ENCODE measurements at regions of chr19 and their contacts with region 1.

Region 1: DNA sequence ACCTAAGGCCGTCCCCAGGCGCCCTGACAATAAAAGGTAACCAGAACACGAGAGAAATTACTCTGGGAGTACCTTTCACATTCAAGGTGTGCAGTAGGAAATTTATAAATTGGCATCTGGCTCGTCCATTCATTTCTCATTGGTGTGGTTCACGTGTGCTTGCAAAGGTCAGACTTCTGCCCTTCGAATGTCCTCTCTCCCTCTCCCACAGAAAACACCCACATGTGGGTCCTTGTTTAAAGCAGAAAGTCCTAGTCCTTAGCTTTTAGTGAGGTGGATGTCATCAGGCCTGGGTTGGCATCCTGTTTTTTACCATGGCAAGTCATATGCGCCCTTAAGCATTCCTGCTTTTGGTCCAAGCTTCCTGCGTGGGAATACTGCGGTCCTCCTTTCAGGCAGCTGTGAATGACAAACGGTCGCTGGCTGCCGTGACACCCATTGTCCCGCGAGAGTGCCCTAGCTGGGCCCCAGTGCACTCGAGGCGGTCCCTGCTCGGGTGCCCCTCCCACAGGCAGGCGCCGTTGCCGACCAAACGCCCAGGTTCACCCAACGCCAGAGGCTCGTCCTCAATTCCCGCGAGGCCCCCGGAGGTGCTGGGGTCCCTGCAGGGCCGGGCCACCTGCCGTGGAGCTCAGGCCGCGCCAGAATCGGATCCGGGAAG is at the start of gene NUDT19:
- DNase-seq: peak; percentile 53 to 85 (median 75)
- ATAC-seq: peak; percentile 79
- H3K4me3 ChIP-seq: peak within 1 kb of the TSS; percentile 60 to 79
- H3K4me3 Mint-ChIP-seq: peak within 1 kb of the TSS; percentile 92
- H3K27ac ChIP-seq: peak within 1 kb of the TSS; percentile 35 to 74
- H3K27ac Mint-ChIP-seq: peak within 1 kb of the TSS; percentile 90
- H3K4me1 ChIP-seq: peaks cover 35% of the 10 kb centered on the region
- H3K4me1 Mint-ChIP-seq: peaks cover 52% of the 10 kb centered on the region
- H3K27me3 ChIP-seq: no peaks in the 10 kb centered on the region
- H3K27me3 Mint-ChIP-seq: no peaks in the 10 kb centered on the region
- CTCF ChIP-seq: no peak
- total RNA-seq, gene NUDT19: 15.3 to 18.0 TPM

Region 2: GRCh38 chr19:32453736-32454135 is 237.7 kb before region 1 on chr19:
- CTCF ChIA-PET with region 1: no interaction called
- POLR2A ChIA-PET with region 1: no interaction called
- intact Hi-C with region 1: no loop called
- DNase-seq: no peak
- ATAC-seq: no peak
- H3K4me3 ChIP-seq: no peak overlapping the region
- H3K4me3 Mint-ChIP-seq: no peak overlapping the region
- H3K27ac ChIP-seq: no peak overlapping the region
- H3K27ac Mint-ChIP-seq: no peak overlapping the region
- H3K4me1 ChIP-seq: no peaks in the 10 kb centered on the region
- H3K4me1 Mint-ChIP-seq: peaks cover 5% of the 10 kb centered on the region
- H3K27me3 ChIP-seq: no peaks in the 10 kb centered on the region
- H3K27me3 Mint-ChIP-seq: no peaks in the 10 kb centered on the region
- CTCF ChIP-seq: no peak

Region 3: DNA sequence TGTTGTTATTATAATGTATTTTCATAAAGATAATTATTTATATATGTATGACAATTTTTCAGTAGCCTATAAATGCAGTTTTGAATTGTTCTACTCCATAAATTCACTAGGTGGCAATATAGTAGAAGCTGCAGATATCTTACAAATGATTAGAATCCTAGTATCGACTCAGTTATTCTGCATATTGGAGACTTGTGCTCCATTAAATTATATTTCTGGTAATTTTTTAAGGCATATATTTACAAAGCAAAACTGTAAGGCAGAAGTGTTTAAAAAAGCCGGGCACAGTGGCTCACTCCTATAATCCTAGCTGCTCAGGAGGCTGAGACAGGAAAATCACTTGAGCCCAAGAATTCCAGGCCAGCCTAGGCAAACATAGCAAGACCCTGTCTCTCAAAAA is 227.1 kb before region 1 on chr19:
- CTCF ChIA-PET with region 1: no interaction called
- POLR2A ChIA-PET with region 1: no interaction called
- intact Hi-C with region 1: no loop called
- DNase-seq: peak in 2 of 9 experiments; percentile 14 to 24
- ATAC-seq: no peak
- H3K4me3 ChIP-seq: no peak overlapping the region
- H3K4me3 Mint-ChIP-seq: no peak overlapping the region
- H3K27ac ChIP-seq: no peak overlapping the region
- H3K27ac Mint-ChIP-seq: no peak overlapping the region
- H3K4me1 ChIP-seq: no peaks in the 10 kb centered on the region
- H3K4me1 Mint-ChIP-seq: no peaks in the 10 kb centered on the region
- H3K27me3 ChIP-seq: no peaks in the 10 kb centered on the region
- H3K27me3 Mint-ChIP-seq: no peaks in the 10 kb centered on the region
- CTCF ChIP-seq: no peak

Region 4: GRCh38 chr19:32595491-32595890 is 95.9 kb before region 1 on chr19:
- CTCF ChIA-PET with region 1: no interaction called
- POLR2A ChIA-PET with region 1: no interaction called
- intact Hi-C with region 1: no loop called
- DNase-seq: peak in 1 of 9 experiments; percentile 34
- ATAC-seq: no peak
- H3K4me3 ChIP-seq: no peak overlapping the region
- H3K4me3 Mint-ChIP-seq: no peak overlapping the region
- H3K27ac ChIP-seq: no peak overlapping the region
- H3K27ac Mint-ChIP-seq: no peak overlapping the region
- H3K4me1 ChIP-seq: no peaks in the 10 kb centered on the region
- H3K4me1 Mint-ChIP-seq: peaks cover 9% of the 10 kb centered on the region
- H3K27me3 ChIP-seq: no peaks in the 10 kb centered on the region
- H3K27me3 Mint-ChIP-seq: no peaks in the 10 kb centered on the region
- CTCF ChIP-seq: no peak

Region 5: DNA sequence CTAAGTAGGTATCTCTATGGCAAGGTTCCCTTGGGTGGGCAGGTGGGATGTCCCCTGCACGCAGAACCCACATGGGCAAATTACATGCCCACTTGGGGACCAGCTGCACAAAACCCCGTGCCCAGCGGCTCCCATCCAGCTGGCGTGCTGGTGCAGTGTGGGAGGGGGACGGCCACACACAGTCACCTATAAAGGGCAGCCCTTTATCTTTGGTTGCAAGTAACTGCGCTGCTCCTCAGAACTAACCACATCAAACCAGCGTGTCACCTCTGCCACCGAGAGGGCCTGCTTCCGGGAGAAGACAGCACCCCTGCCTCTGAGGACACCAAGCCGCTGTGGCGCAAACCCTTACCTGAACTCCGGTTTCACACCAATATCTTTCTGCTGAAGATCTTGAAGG is 48.6 kb before region 1 on chr19:
- CTCF ChIA-PET with region 1: no interaction called
- POLR2A ChIA-PET with region 1: no interaction called
- intact Hi-C with region 1: loop called in 1 of 2 experiments (anchors 5 kb)
- DNase-seq: peak; percentile 43 to 86 (median 66)
- ATAC-seq: peak; percentile 94
- H3K4me3 ChIP-seq: no peak overlapping the region
- H3K4me3 Mint-ChIP-seq: peak overlapping the region; percentile 5
- H3K27ac ChIP-seq: peak overlapping the region; percentile 5 to 45
- H3K27ac Mint-ChIP-seq: peak overlapping the region; percentile 58
- H3K4me1 ChIP-seq: peaks cover 26% of the 10 kb centered on the region
- H3K4me1 Mint-ChIP-seq: peaks cover 35% of the 10 kb centered on the region
- H3K27me3 ChIP-seq: no peaks in the 10 kb centered on the region
- H3K27me3 Mint-ChIP-seq: no peaks in the 10 kb centered on the region
- CTCF ChIP-seq: no peak

Region 6: GRCh38 chr19:32662186-32662585 is 29.2 kb before region 1 on chr19:
- CTCF ChIA-PET with region 1: no interaction called
- POLR2A ChIA-PET with region 1: no interaction called
- intact Hi-C with region 1: no loop called
- DNase-seq: peak in 1 of 9 experiments; percentile 39
- ATAC-seq: no peak
- H3K4me3 ChIP-seq: no peak overlapping the region
- H3K4me3 Mint-ChIP-seq: no peak overlapping the region
- H3K27ac ChIP-seq: no peak overlapping the region
- H3K27ac Mint-ChIP-seq: no peak overlapping the region
- H3K4me1 ChIP-seq: no peaks in the 10 kb centered on the region
- H3K4me1 Mint-ChIP-seq: peaks cover 10% of the 10 kb centered on the region
- H3K27me3 ChIP-seq: no peaks in the 10 kb centered on the region
- H3K27me3 Mint-ChIP-seq: no peaks in the 10 kb centered on the region
- CTCF ChIP-seq: no peak

Region 7: GRCh38 chr19:32748497-32748896 is 57.1 kb after region 1 on chr19:
- CTCF ChIA-PET with region 1: no interaction called
- POLR2A ChIA-PET with region 1: no interaction called
- intact Hi-C with region 1: loop called (anchors 1 to 5 kb)
- DNase-seq: peak in 5 of 9 experiments; percentile 24 to 54 (median 45)
- ATAC-seq: peak; percentile 47
- H3K4me3 ChIP-seq: no peak overlapping the region
- H3K4me3 Mint-ChIP-seq: no peak overlapping the region
- H3K27ac ChIP-seq: no peak overlapping the region
- H3K27ac Mint-ChIP-seq: no peak overlapping the region
- H3K4me1 ChIP-seq: peaks cover 41% of the 10 kb centered on the region
- H3K4me1 Mint-ChIP-seq: peaks cover 28% of the 10 kb centered on the region
- H3K27me3 ChIP-seq: no peaks in the 10 kb centered on the region
- H3K27me3 Mint-ChIP-seq: peaks cover 10% of the 10 kb centered on the region
- CTCF ChIP-seq: peak; percentile 48

Region 8: DNA sequence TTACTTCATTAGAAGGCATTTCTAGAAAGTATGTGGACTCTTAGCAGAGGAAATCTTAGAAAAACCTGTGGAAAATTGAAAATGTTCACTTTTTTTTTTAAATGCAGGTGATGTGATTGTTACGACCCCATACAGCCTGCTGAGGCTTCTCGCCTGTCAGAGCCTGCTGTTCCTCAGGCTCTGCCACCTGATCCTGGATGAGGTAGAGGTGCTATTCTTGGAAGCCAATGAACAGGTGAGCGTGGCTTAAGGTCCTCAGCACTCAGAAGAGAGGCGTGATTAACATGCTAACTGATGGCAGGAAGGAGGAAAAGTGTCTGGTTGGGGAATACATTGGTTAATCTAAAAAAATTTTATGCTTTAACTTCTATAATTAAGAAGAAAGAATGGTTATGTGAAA is 106.8 kb after region 1 on chr19:
- CTCF ChIA-PET with region 1: no interaction called
- POLR2A ChIA-PET with region 1: no interaction called
- intact Hi-C with region 1: loop called in 1 of 2 experiments (anchors 5 kb)
- DNase-seq: no peak
- ATAC-seq: no peak
- H3K4me3 ChIP-seq: no peak overlapping the region
- H3K4me3 Mint-ChIP-seq: no peak overlapping the region
- H3K27ac ChIP-seq: no peak overlapping the region
- H3K27ac Mint-ChIP-seq: no peak overlapping the region
- H3K4me1 ChIP-seq: peaks cover 32% of the 10 kb centered on the region
- H3K4me1 Mint-ChIP-seq: peaks cover 50% of the 10 kb centered on the region
- H3K27me3 ChIP-seq: no peaks in the 10 kb centered on the region
- H3K27me3 Mint-ChIP-seq: no peaks in the 10 kb centered on the region
- CTCF ChIP-seq: no peak

Region 9: GRCh38 chr19:33080761-33081681 is 389.6 kb after region 1 on chr19 and contains the start of gene GPATCH1:
- CTCF ChIA-PET with region 1: no interaction called
- POLR2A ChIA-PET with region 1: no interaction called
- intact Hi-C with region 1: loop called in 1 of 2 experiments (anchors 1 kb)
- DNase-seq: peak; percentile 66 to 89 (median 81)
- ATAC-seq: peak; percentile 96
- H3K4me3 ChIP-seq: peak within 1 kb of the TSS; percentile 76 to 79
- H3K4me3 Mint-ChIP-seq: peak within 1 kb of the TSS; percentile 96
- H3K27ac ChIP-seq: peak within 1 kb of the TSS; percentile 62 to 80
- H3K27ac Mint-ChIP-seq: peak within 1 kb of the TSS; percentile 97
- H3K4me1 ChIP-seq: peaks cover 9% of the 10 kb centered on the region
- H3K4me1 Mint-ChIP-seq: peaks cover 30% of the 10 kb centered on the region
- H3K27me3 ChIP-seq: no peaks in the 10 kb centered on the region
- H3K27me3 Mint-ChIP-seq: no peaks in the 10 kb centered on the region
- CTCF ChIP-seq: no peak
- total RNA-seq, gene GPATCH1: 4.9 to 5.2 TPM

Measured in CD8-positive, alpha-beta T cell (primary cell).